ENCODE measurements at regions of chr1 and their contacts with region 1.

Region 1: GRCh38 chr1:66725885-66726665 is 26.2 kb upstream of the DYNLT5 start:
- DNase-seq: peak; percentile 89
- H3K4me3 ChIP-seq: no peak overlapping the region
- H3K27ac ChIP-seq: no peak overlapping the region
- H3K4me1 ChIP-seq: peaks cover 19% of the 10 kb centered on the region
- H3K27me3 ChIP-seq: no peaks in the 10 kb centered on the region
- CTCF ChIP-seq: peak; percentile 97

Region 2: DNA sequence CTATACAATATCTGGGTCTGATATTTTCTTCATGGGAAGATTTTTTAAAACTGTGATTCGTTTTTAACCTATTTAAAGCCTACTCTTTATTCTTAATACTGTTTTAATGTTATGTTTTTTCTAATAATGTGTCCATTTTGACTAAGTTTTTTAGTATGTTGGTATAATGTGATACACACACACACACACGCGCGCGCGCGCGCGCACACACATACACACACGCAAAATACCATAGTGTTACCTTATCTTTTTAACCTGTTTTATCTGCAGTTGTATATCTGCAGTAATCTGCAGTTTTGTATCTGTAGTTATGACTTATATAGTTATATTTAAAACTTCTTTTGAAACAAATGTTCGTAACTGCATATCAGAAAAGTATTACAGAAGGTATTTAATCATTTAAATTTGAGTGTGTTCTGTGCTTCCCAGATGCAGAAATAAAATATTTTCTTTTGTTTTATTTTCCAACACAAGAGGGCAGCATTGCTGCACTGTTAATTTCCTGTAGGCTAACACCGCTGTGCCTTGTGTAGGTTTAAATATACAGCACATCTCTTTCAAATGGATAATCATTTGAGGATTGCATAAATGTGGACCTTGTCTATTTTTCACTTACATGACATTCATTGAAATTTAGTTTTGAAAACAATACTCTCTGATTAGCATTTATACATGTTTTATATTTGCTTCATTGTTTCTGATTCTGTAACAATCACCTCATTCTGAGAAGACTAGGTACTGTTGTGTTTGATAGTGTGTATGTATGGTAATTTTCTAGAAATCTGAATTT is 767.3 kb before region 1 on chr1:
- CTCF ChIA-PET with region 1: no interaction called
- POLR2A ChIA-PET with region 1: no interaction called
- intact Hi-C with region 1: loop called (anchors 10 kb)
- DNase-seq: peak; percentile 75
- H3K4me3 ChIP-seq: no peak overlapping the region
- H3K27ac ChIP-seq: no peak overlapping the region
- H3K4me1 ChIP-seq: no peaks in the 10 kb centered on the region
- H3K27me3 ChIP-seq: no peaks in the 10 kb centered on the region
- CTCF ChIP-seq: peak; percentile 75

Region 3: GRCh38 chr1:66253330-66253921 is 472.6 kb before region 1 on chr1:
- CTCF ChIA-PET with region 1: no interaction called
- POLR2A ChIA-PET with region 1: no interaction called
- intact Hi-C with region 1: loop called (anchors 2 kb)
- DNase-seq: peak; percentile 82
- H3K4me3 ChIP-seq: no peak overlapping the region
- H3K27ac ChIP-seq: no peak overlapping the region
- H3K4me1 ChIP-seq: peaks cover 42% of the 10 kb centered on the region
- H3K27me3 ChIP-seq: no peaks in the 10 kb centered on the region
- CTCF ChIP-seq: peak; percentile 81